ENCODE measurements at regions of chr17 and their contacts with region 1.

Region 1: GRCh38 chr17:7484067-7484918 is at the start of gene POLR2A:
- DNase-seq: peak; percentile 99
- ATAC-seq: peak; percentile 66
- H3K4me3 Mint-ChIP-seq: peak within 1 kb of the TSS; percentile 98
- H3K27ac Mint-ChIP-seq: peak within 1 kb of the TSS; percentile 100
- H3K4me1 Mint-ChIP-seq: peaks cover 69% of the 10 kb centered on the region
- H3K27me3 Mint-ChIP-seq: no peaks in the 10 kb centered on the region
- CTCF ChIP-seq: no peak
- total RNA-seq, gene POLR2A: 148 and 162 TPM in 2 replicates

Region 2: DNA sequence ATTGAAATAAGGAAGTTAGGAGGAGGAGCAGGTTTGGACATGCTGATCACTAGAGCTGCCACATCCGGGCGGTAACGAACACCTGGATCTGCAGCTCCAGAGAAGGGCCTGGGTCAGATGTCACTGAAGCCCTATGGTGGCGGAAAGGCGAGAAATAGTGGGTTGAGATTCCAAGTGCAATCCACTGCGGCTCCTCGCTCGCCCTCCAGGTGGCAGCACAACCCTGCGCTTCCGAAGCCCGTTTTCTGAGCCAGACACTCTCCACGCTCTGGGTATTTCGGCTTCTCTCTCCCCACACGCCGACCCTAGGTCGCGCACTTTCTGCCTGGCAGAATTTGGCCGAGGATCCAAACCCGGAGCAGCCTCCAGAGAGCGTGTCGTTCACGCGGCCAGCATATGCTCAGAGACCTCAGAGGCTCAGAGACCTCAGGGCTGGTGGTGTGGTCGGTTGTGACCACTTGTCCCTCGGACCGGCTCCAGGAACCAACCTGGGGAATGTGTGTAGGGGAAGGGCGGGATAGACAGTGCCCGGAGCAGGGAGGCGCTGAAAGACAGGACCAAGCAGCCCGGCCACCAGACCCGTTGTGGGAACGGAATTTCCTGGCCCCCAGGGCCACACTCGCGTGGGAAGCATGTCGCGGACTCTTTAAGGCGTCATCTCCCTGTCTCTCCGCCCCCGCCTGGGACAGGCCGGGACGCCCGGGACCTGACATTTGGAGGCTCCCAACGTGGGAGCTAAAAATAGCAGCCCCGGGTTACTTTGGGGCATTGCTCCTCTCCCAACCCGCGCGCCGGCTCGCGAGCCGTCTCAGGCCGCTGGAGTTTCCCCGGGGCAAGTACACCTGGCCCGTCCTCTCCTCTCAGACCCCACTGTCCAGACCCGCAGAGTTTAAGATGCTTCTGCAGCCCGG is 203.5 kb before region 1 on chr17:
- CTCF ChIA-PET with region 1: no interaction called
- POLR2A ChIA-PET with region 1: interaction called, 10 read pairs
- intact Hi-C with region 1: loop called (anchors 1 kb)
- DNase-seq: peak; percentile 82
- ATAC-seq: peak; percentile 83
- H3K4me3 Mint-ChIP-seq: peak overlapping the region; percentile 82
- H3K27ac Mint-ChIP-seq: peak overlapping the region; percentile 77
- H3K4me1 Mint-ChIP-seq: peaks cover 14% of the 10 kb centered on the region
- H3K27me3 Mint-ChIP-seq: peaks cover 12% of the 10 kb centered on the region
- CTCF ChIP-seq: peak; percentile 42

Region 3: GRCh38 chr17:7351665-7352501 is 132.4 kb before region 1 on chr17 and contains the start of gene KCTD11:
- CTCF ChIA-PET with region 1: interaction called, 7 read pairs
- POLR2A ChIA-PET with region 1: interaction called, 12 read pairs
- intact Hi-C with region 1: loop called (anchors 1 kb)
- DNase-seq: peak; percentile 78
- ATAC-seq: peak; percentile 63
- H3K4me3 Mint-ChIP-seq: peak within 1 kb of the TSS; percentile 87
- H3K27ac Mint-ChIP-seq: peak within 1 kb of the TSS; percentile 87
- H3K4me1 Mint-ChIP-seq: peaks cover 42% of the 10 kb centered on the region
- H3K27me3 Mint-ChIP-seq: no peaks in the 10 kb centered on the region
- CTCF ChIP-seq: no peak
- total RNA-seq, gene KCTD11: 7.2 and 7.8 TPM in 2 replicates

Region 4: GRCh38 chr17:7435221-7435675 is 49.0 kb before region 1 on chr17 and contains the start of gene TMEM102:
- CTCF ChIA-PET with region 1: interaction called, 10 read pairs
- POLR2A ChIA-PET with region 1: interaction called, 87 read pairs
- intact Hi-C with region 1: loop called (anchors 1 kb)
- DNase-seq: peak; percentile 95
- ATAC-seq: peak; percentile 87
- H3K4me3 Mint-ChIP-seq: peak within 1 kb of the TSS; percentile 94
- H3K27ac Mint-ChIP-seq: peak within 1 kb of the TSS; percentile 93
- H3K4me1 Mint-ChIP-seq: peaks cover 45% of the 10 kb centered on the region
- H3K27me3 Mint-ChIP-seq: peaks cover 15% of the 10 kb centered on the region
- CTCF ChIP-seq: no peak
- total RNA-seq, gene TMEM102: 13.4 and 14.8 TPM in 2 replicates

Region 5: GRCh38 chr17:7528842-7529241 is 44.5 kb after region 1 on chr17:
- CTCF ChIA-PET with region 1: no interaction called
- POLR2A ChIA-PET with region 1: no interaction called
- intact Hi-C with region 1: no loop called
- DNase-seq: no peak
- ATAC-seq: no peak
- H3K4me3 Mint-ChIP-seq: no peak overlapping the region
- H3K27ac Mint-ChIP-seq: no peak overlapping the region
- H3K4me1 Mint-ChIP-seq: no peaks in the 10 kb centered on the region
- H3K27me3 Mint-ChIP-seq: no peaks in the 10 kb centered on the region
- CTCF ChIP-seq: no peak

Region 6: DNA sequence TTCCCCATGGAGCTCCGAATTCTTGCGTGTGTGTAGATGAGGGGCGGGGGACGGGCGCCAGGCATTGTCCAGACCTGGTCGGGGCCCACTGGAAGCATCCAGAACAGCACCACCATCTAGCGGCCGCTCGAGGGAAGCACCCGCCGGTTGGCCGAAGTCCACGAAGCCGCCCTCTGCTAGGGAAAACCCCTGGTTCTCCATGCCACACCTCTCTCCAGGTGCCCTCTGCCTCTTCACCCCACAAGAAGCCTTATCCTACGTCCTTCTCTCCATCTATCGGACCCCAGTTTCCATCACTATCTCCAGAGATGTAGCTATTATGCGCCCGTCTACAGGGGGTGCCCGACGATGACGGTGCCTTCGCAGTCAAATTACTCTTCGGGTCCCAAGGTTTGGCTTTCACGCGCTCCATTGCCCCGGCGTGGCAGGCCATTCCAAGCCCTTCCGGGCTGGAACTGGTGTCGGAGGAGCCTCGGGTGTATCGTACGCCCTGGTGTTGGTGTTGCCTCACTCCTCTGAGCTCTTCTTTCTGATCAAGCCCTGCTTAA is 76.8 kb after region 1 on chr17:
- CTCF ChIA-PET with region 1: interaction called, 4 read pairs
- POLR2A ChIA-PET with region 1: interaction called, 30 read pairs
- intact Hi-C with region 1: loop called (anchors 1 kb)
- DNase-seq: peak; percentile 76
- ATAC-seq: peak; percentile 68
- H3K4me3 Mint-ChIP-seq: peak overlapping the region; percentile 92
- H3K27ac Mint-ChIP-seq: peak overlapping the region; percentile 96
- H3K4me1 Mint-ChIP-seq: peaks cover 60% of the 10 kb centered on the region
- H3K27me3 Mint-ChIP-seq: no peaks in the 10 kb centered on the region
- CTCF ChIP-seq: no peak

Region 7: GRCh38 chr17:7844292-7845154 is 360.2 kb after region 1 on chr17:
- CTCF ChIA-PET with region 1: no interaction called
- POLR2A ChIA-PET with region 1: interaction called, 4 read pairs
- intact Hi-C with region 1: loop called (anchors 2 kb)
- DNase-seq: peak; percentile 83
- ATAC-seq: peak; percentile 46
- H3K4me3 Mint-ChIP-seq: peak overlapping the region; percentile 98
- H3K27ac Mint-ChIP-seq: peak overlapping the region; percentile 100
- H3K4me1 Mint-ChIP-seq: peaks cover 50% of the 10 kb centered on the region
- H3K27me3 Mint-ChIP-seq: no peaks in the 10 kb centered on the region
- CTCF ChIP-seq: no peak

Region 8: DNA sequence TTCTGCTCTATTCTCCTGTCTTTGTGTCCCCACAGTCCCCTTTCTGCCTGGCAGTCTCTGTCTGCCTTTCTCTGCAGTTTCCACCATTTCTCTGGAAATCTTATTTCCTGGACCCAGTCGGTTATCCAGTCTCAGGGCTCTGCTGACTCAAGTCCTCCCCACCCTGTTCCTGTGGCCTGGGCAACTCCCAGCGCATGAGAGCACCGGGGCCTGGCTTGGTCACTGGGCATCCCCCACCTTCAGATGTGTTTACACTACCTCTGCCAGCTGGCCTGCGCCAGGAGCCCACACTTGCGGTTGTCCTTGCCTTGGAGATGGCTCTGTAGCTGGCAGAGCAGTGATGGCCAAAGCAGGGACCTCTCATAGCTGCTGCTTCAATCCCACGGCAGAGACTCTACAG is 535.4 kb after region 1 on chr17:
- CTCF ChIA-PET with region 1: no interaction called
- POLR2A ChIA-PET with region 1: no interaction called
- intact Hi-C with region 1: no loop called
- DNase-seq: no peak
- ATAC-seq: no peak
- H3K4me3 Mint-ChIP-seq: no peak overlapping the region
- H3K27ac Mint-ChIP-seq: no peak overlapping the region
- H3K4me1 Mint-ChIP-seq: peaks cover 10% of the 10 kb centered on the region
- H3K27me3 Mint-ChIP-seq: peaks cover 54% of the 10 kb centered on the region
- CTCF ChIP-seq: no peak

Measured in activated B cell treated with CpG ODN at 0.5 μM for 24 hours (primary cell).